ENCODE measurements at regions of chr20 and their contacts with region 1.

Region 1: GRCh38 chr20:35454881-35455609 is at the start of gene CEP250:
- DNase-seq: peak; percentile 90
- ATAC-seq: peak; percentile 99
- H3K4me3 Mint-ChIP-seq: peak within 1 kb of the TSS; percentile 93
- H3K27ac Mint-ChIP-seq: peak within 1 kb of the TSS; percentile 99
- H3K4me1 Mint-ChIP-seq: peaks cover 12% of the 10 kb centered on the region
- H3K27me3 Mint-ChIP-seq: no peaks in the 10 kb centered on the region
- CTCF ChIP-seq: no peak
- total RNA-seq, gene CEP250: 49.6 and 54.7 TPM in 2 replicates

Region 2: DNA sequence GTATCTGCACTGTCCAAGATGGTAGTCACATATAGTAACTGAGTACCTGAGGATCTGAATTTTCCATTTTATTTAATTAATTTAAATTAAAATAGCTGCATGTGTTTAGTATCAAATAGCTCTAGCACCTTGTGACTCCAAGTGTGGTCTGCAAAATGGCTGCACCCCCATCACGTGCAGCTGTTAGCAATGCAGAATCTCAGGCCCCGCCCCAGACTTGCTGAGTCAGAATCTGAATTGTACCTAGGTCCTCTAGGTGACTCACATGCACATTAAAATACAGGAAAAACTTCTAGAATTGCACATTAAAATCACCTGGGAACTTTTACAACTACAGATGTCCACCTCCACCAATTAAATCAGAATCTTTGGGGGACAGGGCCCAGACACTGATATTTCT is 143.6 kb before region 1 on chr20:
- CTCF ChIA-PET with region 1: no interaction called
- POLR2A ChIA-PET with region 1: no interaction called
- intact Hi-C with region 1: no loop called
- DNase-seq: no peak
- ATAC-seq: no peak
- H3K4me3 Mint-ChIP-seq: no peak overlapping the region
- H3K27ac Mint-ChIP-seq: no peak overlapping the region
- H3K4me1 Mint-ChIP-seq: no peaks in the 10 kb centered on the region
- H3K27me3 Mint-ChIP-seq: no peaks in the 10 kb centered on the region
- CTCF ChIP-seq: no peak

Region 3: DNA sequence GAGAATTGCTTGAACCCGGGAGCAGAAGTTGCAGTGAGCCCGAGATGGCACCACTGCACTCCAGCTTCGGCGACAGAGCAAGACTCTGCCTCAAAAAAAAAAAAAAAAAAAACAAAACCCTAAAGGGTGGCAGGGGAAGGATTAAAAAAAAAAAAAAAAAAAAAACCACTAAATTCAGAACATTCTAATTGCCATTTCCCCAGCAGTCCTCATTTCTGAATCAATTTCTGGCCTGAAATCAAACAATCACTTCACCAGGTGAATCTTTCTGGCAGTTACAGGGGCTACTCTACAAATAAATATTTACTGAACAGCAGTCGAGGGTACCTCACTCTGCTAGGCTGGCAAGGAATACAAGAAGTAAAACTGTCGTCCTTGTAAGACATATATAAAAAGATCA is 44.4 kb before region 1 on chr20:
- CTCF ChIA-PET with region 1: no interaction called
- POLR2A ChIA-PET with region 1: interaction called, 3 read pairs
- intact Hi-C with region 1: loop called (anchors 1 kb)
- DNase-seq: no peak
- ATAC-seq: no peak
- H3K4me3 Mint-ChIP-seq: peak overlapping the region; percentile 97
- H3K27ac Mint-ChIP-seq: no peak overlapping the region
- H3K4me1 Mint-ChIP-seq: peaks cover 19% of the 10 kb centered on the region
- H3K27me3 Mint-ChIP-seq: no peaks in the 10 kb centered on the region
- CTCF ChIP-seq: no peak

Region 4: DNA sequence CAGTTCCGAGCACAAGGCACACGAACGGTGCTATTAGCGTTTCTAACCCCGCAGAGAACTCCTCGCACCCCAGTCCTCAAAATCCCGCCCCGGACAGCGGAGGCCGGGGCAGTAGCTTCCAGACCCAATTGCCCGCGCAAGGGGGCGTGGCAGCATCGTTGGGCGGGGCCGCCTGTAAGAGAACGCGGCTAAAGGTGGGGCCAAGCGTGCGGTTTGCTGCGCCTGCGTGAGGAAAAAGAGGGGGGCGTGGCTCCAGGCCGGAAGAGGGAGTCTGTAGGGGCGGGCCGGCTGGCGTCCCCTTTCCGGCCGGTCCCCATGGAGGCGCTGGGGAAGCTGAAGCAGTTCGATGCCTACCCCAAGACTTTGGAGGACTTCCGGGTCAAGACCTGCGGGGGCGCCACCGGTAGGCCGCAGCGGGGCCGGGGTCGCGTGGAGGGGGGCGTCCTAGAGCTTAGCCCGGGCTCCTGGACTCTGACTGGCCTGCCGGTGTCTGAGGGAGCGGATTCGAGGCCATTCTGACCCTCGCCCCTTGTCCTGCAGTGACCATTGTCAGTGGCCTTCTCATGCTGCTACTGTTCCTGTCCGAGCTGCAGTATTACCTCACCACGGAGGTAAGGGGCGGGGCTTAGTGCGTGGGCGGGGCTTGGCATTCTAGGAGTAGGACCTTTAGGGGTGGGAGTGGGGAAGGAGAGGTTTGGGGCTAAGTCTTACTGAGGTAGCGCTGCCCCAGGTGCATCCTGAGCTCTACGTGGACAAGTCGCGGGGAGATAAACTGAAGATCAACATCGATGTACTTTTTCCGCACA is 86.9 kb after region 1 on chr20 and contains the start of gene ERGIC3:
- CTCF ChIA-PET with region 1: no interaction called
- POLR2A ChIA-PET with region 1: no interaction called
- intact Hi-C with region 1: loop called (anchors 2 kb)
- DNase-seq: peak; percentile 97
- ATAC-seq: peak; percentile 92
- H3K4me3 Mint-ChIP-seq: peak within 1 kb of the TSS; percentile 92
- H3K27ac Mint-ChIP-seq: peak within 1 kb of the TSS; percentile 77
- H3K4me1 Mint-ChIP-seq: peaks cover 21% of the 10 kb centered on the region
- H3K27me3 Mint-ChIP-seq: no peaks in the 10 kb centered on the region
- CTCF ChIP-seq: no peak
- total RNA-seq, gene ERGIC3: 159 and 183 TPM in 2 replicates

Region 5: GRCh38 chr20:35711588-35712209 is 256.7 kb after region 1 on chr20:
- CTCF ChIA-PET with region 1: no interaction called
- POLR2A ChIA-PET with region 1: interaction called, 10 read pairs
- intact Hi-C with region 1: no loop called
- DNase-seq: no peak
- ATAC-seq: no peak
- H3K4me3 Mint-ChIP-seq: no peak overlapping the region
- H3K27ac Mint-ChIP-seq: no peak overlapping the region
- H3K4me1 Mint-ChIP-seq: peaks cover 33% of the 10 kb centered on the region
- H3K27me3 Mint-ChIP-seq: no peaks in the 10 kb centered on the region
- CTCF ChIP-seq: no peak

Region 6: GRCh38 chr20:35883778-35884540 is 428.9 kb after region 1 on chr20:
- CTCF ChIA-PET with region 1: no interaction called
- POLR2A ChIA-PET with region 1: no interaction called
- intact Hi-C with region 1: loop called (anchors 2 kb)
- DNase-seq: peak; percentile 28
- ATAC-seq: peak; percentile 85
- H3K4me3 Mint-ChIP-seq: no peak overlapping the region
- H3K27ac Mint-ChIP-seq: no peak overlapping the region
- H3K4me1 Mint-ChIP-seq: peaks cover 2% of the 10 kb centered on the region
- H3K27me3 Mint-ChIP-seq: no peaks in the 10 kb centered on the region
- CTCF ChIP-seq: no peak